Ovary (tissue), 10 donors: ENCODE measurements at regions of chr9 and their contacts with region 1.

Region 1: DNA sequence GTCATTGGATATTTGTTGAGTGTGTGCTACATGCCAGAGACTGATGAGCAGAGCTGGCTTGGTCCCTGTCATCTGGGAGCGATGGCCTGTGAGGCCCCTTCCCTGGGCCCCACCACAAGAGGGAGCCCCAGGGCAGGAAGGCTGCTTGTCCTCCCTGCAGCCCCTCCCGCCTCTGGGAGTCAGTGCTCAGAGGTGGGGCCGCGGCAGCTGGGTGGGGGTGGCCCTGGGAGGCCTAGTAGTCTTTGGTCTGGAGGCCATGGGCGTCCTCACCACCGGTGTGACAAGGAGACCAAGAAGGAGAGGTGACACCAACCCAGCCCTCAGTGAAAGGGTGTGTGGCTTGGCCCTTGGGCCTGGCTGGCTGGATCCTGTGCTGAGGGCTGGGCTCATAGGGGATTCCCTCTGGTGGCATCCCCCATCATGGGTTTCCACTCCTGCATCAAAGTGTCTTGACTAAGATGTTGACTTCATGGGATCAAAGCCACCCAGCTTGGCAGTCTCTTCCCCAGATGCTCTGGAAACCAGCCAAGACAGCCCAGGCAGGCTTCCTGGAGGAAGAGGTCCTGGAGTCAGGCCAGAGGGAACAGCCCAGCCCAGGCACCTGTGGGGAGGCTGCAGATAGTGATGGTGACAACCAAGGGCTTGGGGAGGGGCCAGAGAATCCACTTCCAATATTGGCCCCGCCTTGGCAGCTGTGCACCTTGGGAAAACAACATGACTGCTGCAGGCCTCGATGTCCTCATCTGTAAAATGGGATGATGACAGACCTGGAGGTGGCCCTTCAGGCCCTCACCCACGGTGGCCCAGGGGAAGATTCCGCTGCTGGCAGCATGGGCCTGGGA is 166.7 kb downstream of the GAPVD1 start:
- DNase-seq: no peak
- H3K4me3 ChIP-seq: no peak overlapping the region
- H3K27ac ChIP-seq: peak overlapping the region in 1 of 2 donors; percentile 8
- H3K4me1 ChIP-seq: peaks cover 17% of the 10 kb centered on the region
- H3K27me3 ChIP-seq: no peaks in the 10 kb centered on the region
- CTCF ChIP-seq: no peak
- EP300 ChIP-seq: no peak
- POLR2A ChIP-seq: no peak

Region 2: DNA sequence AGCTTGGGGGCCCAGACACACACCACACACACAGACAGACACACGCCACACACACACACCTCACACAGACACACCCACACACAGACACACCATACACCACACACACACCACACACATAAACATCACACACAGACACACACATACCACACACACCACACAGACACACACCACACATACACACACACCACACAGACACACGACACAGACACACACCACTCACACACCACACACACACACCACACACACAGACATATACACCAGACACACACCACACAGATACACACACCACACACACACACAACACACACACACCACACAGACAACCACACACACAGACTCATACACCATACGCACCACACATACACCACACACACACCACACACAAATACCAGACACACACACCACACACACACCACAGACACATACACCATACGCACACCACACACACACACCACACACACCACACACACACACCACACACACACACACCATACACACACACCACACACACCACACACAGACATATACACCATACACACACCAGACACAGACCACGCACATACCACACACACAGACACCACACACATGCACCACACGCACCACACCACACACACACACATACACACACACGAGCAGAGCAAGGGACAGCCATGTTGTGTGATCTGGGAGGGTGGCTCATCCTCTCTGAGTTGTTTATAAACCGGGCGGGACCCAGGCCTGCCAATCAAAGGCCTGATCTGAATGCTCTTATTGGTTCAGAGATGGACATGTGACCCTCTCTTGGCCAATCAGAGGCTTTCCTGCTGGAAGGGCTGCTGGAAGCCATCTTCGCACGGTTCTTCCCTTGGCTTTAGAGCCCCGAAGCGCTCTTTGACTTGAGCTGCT is 18.4 kb before region 1 on chr9:
- intact Hi-C with region 1: no loop called
- DNase-seq: peak in 1 of 5 donors; percentile 54
- H3K4me3 ChIP-seq: no peak overlapping the region
- H3K27ac ChIP-seq: peak overlapping the region in 1 of 2 donors; percentile 19
- H3K4me1 ChIP-seq: peaks cover 6% of the 10 kb centered on the region
- H3K27me3 ChIP-seq: no peaks in the 10 kb centered on the region
- CTCF ChIP-seq: no peak
- EP300 ChIP-seq: no peak
- POLR2A ChIP-seq: no peak

Region 3: DNA sequence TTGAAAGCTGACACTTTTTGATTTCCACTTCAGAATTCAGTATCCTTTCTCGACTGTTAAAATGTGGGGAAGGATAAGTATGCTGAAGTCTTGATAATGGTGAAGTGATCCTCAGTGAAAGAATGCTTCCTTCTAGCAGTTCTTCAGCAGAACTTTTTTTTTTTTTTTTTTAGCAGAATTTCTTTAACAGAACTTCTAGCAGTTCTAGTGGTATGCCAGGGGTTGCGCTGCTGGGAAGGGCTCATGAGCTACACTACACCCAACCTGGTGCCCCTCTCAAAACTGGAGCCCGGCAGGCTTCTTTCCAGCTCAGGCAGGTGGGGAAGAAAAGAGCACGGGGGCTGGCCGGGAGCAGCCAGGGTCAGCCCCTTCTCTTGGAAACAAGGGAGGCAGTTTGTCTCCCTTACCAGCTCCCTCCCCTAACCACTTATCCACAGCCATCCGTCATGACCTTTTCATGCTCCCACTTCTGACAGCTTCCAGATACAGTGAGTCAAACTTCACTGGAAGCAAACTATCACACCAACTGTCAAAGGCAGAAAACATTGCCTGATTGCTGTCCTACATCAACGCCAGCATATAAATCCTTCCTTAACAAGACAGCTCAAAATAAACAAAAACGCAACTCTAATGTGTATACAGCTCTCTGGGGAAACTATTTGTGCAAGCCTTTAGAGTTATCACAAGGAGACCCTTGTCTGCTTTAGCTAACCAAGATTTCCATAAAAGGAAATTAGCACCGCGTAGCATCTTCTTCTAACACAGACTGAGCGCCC is 44.8 kb after region 1 on chr9:
- intact Hi-C with region 1: loop called in 1 of 4 experiments (anchors 10 kb)
- DNase-seq: peak; percentile 62 to 73 (median 67)
- H3K4me3 ChIP-seq: no peak overlapping the region
- H3K27ac ChIP-seq: peak overlapping the region in 1 of 2 donors; percentile 71
- H3K4me1 ChIP-seq: peaks cover 30% of the 10 kb centered on the region
- H3K27me3 ChIP-seq: no peaks in the 10 kb centered on the region
- CTCF ChIP-seq: no peak
- EP300 ChIP-seq: no peak
- POLR2A ChIP-seq: no peak

Region 4: GRCh38 chr9:125544988-125545651 is 116.8 kb after region 1 on chr9:
- intact Hi-C with region 1: loop called in 1 of 4 experiments (anchors 10 kb)
- DNase-seq: peak in 3 of 5 donors; percentile 33 to 54 (median 41)
- H3K4me3 ChIP-seq: no peak overlapping the region
- H3K27ac ChIP-seq: peak overlapping the region in 1 of 2 donors; percentile 58
- H3K4me1 ChIP-seq: peaks cover 39% of the 10 kb centered on the region
- H3K27me3 ChIP-seq: no peaks in the 10 kb centered on the region
- CTCF ChIP-seq: no peak
- EP300 ChIP-seq: no peak
- POLR2A ChIP-seq: no peak

Region 5: DNA sequence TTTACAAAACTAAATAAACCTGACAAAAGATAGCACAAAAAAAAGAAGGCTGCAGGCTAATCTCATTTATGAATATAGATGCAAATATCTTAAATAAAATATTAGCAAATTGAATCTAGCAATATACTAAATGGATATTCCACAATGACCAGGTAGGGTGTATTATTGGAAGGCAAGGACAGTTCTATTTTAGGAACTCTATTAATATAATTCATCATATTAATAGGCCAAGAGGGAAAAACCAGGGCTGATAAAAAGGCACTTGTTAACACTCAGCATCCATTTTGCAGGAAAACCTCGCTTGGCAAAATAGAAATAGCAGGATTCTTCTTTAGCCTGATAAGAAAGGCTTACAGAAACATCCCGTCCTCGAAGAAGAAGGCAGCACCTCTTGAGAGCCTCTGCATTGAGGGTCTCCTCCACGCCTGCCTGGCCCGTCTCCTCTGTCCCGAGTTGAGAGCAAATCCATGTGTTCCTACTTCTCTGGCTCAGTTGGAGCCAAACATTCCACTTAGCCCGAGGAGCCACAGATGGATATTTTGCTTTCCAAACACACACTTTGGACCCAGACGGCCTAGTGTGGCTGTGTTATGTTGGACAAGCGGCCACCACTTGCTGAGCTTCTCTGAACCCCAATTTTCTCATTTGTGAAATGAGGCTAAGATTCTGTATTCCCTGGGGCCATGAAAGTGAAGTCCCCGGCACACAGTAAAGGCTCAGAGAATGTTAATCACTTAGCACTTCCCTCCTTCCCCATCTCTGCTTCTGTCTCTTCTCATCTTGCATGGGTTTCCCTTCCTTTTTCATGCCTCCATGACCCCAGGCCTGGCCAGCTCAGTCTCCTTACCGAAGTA is 716.5 kb after region 1 on chr9:
- intact Hi-C with region 1: no loop called
- DNase-seq: peak in 1 of 5 donors; percentile 4
- H3K4me3 ChIP-seq: no peak overlapping the region
- H3K27ac ChIP-seq: no peak overlapping the region
- H3K4me1 ChIP-seq: no peaks in the 10 kb centered on the region
- H3K27me3 ChIP-seq: no peaks in the 10 kb centered on the region
- CTCF ChIP-seq: no peak
- EP300 ChIP-seq: no peak
- POLR2A ChIP-seq: no peak